ENCODE measurements at regions of chr6 and their contacts with region 1.

Region 1: DNA sequence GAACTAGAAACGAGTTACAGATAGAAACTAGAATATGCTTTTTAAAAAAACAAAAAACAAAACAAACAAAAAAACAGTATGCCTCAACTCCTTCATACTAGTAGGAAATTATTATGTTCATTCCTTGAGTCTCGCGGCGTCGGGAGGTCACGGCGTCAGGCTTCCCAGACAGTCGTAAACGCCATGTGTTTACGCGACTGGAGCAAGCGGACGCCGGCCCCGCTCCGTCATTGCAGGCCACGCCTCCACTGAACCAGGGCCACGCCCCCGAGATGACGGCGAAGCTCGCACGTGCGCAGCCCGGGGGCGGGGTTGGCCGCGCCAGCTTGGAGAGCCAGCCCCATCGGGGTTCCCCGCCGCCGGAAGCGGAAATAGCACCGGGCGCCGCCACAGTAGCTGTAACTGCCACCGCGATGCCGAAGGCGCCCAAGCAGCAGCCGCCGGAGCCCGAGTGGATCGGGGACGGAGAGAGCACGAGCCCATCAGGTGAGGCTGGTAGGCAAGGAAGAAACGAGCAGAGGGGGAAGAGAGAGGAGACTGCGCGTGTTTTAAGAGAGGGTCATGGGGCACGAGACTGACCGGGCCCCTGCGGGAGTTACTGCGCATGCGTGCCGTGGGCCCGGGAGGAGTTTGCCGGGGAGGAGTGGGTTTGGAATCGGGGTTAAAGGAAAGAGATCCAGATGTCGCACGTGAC is at the start of gene ABCF1:
- DNase-seq: peak; percentile 99 to 100
- ATAC-seq: peak; percentile 99
- H3K4me3 ChIP-seq: peak within 1 kb of the TSS; percentile 81
- H3K27ac ChIP-seq: peak within 1 kb of the TSS; percentile 95
- H3K4me1 ChIP-seq: peaks cover 32% of the 10 kb centered on the region
- H3K27me3 ChIP-seq: no peaks in the 10 kb centered on the region
- CTCF ChIP-seq: no peak
- total RNA-seq, gene ABCF1: 64.2 to 108 (median 95.5) TPM

Region 2: GRCh38 chr6:30463651-30464618 is 107.3 kb before region 1 on chr6:
- intact Hi-C with region 1: no loop called
- DNase-seq: peak; percentile 38 to 62
- ATAC-seq: peak in 3 of 4 donors; percentile 39 to 58 (median 55)
- H3K4me3 ChIP-seq: peak overlapping the region; percentile 2
- H3K27ac ChIP-seq: no peak overlapping the region
- H3K4me1 ChIP-seq: peaks cover 16% of the 10 kb centered on the region
- H3K27me3 ChIP-seq: peaks cover 3 to 97% (median 42%) of the 10 kb centered on the region in 3 donors
- CTCF ChIP-seq: no peak

Region 3: GRCh38 chr6:30556066-30556905 is 14.9 kb before region 1 on chr6 and contains the start of gene GNL1:
- intact Hi-C with region 1: loop called in 1 of 2 experiments (anchors 2 kb)
- DNase-seq: peak; percentile 93 to 96
- ATAC-seq: peak; percentile 81 to 87 (median 86)
- H3K4me3 ChIP-seq: peak within 1 kb of the TSS; percentile 99
- H3K27ac ChIP-seq: peak within 1 kb of the TSS; percentile 95
- H3K4me1 ChIP-seq: peaks cover 16% of the 10 kb centered on the region
- H3K27me3 ChIP-seq: no peaks in the 10 kb centered on the region
- CTCF ChIP-seq: no peak
- total RNA-seq, gene GNL1: 20.1 to 26.3 (median 24.2) TPM

Region 4: DNA sequence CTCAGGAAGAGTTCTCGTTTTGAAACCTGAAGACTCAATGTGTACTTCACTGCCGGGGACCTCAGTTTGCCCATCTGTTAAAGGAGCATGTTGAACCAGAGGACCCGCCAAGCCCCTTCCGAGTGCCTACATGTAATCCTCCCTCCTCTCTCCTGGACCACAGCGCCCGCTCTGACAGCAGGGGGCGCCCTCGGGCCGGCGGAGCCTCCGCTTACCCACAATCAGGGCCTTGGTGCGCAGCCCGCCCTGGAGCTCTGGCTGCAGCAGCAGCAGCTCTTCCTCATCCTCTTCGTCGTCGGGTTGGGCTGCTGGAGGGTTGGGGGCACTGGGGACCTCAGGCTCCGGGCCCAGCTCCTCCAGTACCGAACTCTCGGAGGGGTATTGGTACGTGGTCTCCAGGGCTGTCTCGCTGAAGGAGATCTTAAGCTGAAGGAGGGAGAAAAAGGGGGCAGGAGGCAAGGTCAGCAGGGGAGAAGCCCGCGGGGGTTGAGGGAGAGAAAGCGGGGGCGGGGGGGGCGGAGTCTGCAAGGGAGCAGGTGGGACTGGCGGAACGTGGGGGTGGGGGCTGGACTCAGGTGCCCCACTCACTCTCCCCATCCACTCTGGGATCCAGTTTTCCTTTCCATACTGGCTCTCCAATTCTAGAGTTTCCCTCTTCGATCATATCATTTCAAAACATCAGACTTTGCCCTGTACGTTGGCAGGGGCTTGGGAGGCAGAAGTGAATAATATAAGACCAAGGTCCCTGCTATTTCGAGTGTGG is 107.9 kb after region 1 on chr6:
- intact Hi-C with region 1: loop called in 1 of 2 experiments (anchors 5 kb)
- DNase-seq: peak; percentile 88 to 93
- ATAC-seq: peak; percentile 83 to 94 (median 90)
- H3K4me3 ChIP-seq: peak overlapping the region; percentile 85
- H3K27ac ChIP-seq: no peak overlapping the region
- H3K4me1 ChIP-seq: peaks cover 9% of the 10 kb centered on the region
- H3K27me3 ChIP-seq: no peaks in the 10 kb centered on the region
- CTCF ChIP-seq: peak; percentile 95